H1 (cell line): ENCODE measurements at regions of chr3 and their contacts with region 1.

Region 1: GRCh38 chr3:48088749-48089466 is 72.7 kb upstream of the MAP4 start:
- DNase-seq: peak; percentile 91 to 94
- H3K4me3 ChIP-seq: peak overlapping the region; percentile 71 to 99 (median 82)
- H3K27ac ChIP-seq: peak overlapping the region; percentile 98
- H3K4me1 ChIP-seq: peaks cover 0 to 5% (median 0%) of the 10 kb centered on the region in 4 experiments; a peak in 2 of 7 replicates
- H3K27me3 ChIP-seq: no peaks in the 10 kb centered on the region
- CTCF ChIP-seq: peak in 2 of 3 experiments; percentile 1 to 24; a peak in 2 of 4 replicates
- EP300 ChIP-seq: no peak
- POLR2A ChIP-seq: peak; percentile 91 to 98
- RAD21 ChIP-seq: peak; percentile 25 to 44; a peak in 3 of 4 replicates

Region 2: DNA sequence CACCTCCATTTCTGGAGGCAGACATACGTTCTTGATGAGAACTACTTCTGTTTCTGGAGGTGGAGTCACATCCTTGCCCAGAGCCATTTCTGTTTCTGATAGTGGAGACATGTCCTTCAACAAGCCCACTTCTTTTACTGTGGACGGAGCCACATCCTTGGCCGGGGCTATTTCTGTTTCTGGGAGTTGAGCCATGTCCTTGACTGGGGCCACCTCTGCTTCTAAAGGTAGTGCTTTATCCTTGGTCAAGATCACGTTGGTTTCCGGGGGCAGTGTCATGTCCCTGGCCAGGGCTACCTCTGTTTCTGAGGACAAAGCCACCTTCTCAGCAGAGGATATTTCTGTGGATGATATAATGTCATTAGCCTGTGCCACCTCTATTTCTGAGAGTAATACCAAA is 172.7 kb before region 1 on chr3:
- CTCF ChIA-PET with region 1: no interaction called
- POLR2A ChIA-PET with region 1: no interaction called
- DNase-seq: no peak
- H3K4me3 ChIP-seq: no peak overlapping the region
- H3K27ac ChIP-seq: no peak overlapping the region
- H3K4me1 ChIP-seq: no peaks in the 10 kb centered on the region
- H3K27me3 ChIP-seq: no peaks in the 10 kb centered on the region
- CTCF ChIP-seq: no peak
- EP300 ChIP-seq: no peak
- POLR2A ChIP-seq: no peak
- RAD21 ChIP-seq: no peak

Region 3: GRCh38 chr3:48077815-48078214 is 11.1 kb before region 1 on chr3:
- CTCF ChIA-PET with region 1: interaction called, 3 read pairs
- POLR2A ChIA-PET with region 1: interaction called, 57 read pairs
- DNase-seq: no peak
- H3K4me3 ChIP-seq: no peak overlapping the region
- H3K27ac ChIP-seq: no peak overlapping the region
- H3K4me1 ChIP-seq: no peaks in the 10 kb centered on the region
- H3K27me3 ChIP-seq: no peaks in the 10 kb centered on the region
- CTCF ChIP-seq: no peak
- EP300 ChIP-seq: no peak
- POLR2A ChIP-seq: no peak
- RAD21 ChIP-seq: no peak

Region 4: DNA sequence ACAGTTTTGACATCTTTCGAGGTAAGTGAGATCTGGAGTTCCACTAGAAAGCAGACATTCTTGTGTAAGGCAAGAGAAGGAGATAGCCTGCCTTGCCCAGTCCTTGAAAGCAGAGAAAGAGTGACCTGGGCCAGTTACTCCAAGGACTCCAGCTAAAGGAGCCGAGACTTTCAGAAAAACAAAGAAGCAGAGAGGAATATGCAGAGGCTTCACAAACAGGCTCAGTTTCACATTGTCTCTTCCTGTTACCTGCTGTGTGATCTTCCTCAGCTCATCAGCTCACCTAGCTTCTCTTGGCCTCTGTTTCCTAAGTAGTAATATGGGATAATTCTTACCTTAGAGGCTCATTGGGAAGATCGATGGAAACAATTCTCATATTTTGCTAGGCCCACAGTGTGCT is 18.3 kb after region 1 on chr3:
- CTCF ChIA-PET with region 1: interaction called, 3 read pairs
- POLR2A ChIA-PET with region 1: interaction called, 48 read pairs
- DNase-seq: no peak
- H3K4me3 ChIP-seq: no peak overlapping the region
- H3K27ac ChIP-seq: peak overlapping the region; percentile 2; the same call in 1 of the 2 replicates
- H3K4me1 ChIP-seq: peaks cover 0 to 2% (median 0%) of the 10 kb centered on the region in 4 experiments; a peak in 1 of 7 replicates
- H3K27me3 ChIP-seq: no peaks in the 10 kb centered on the region
- CTCF ChIP-seq: no peak
- EP300 ChIP-seq: no peak
- POLR2A ChIP-seq: no peak
- RAD21 ChIP-seq: 0 out of 4 replicates have a peak, but pooled peaks of 1 of the 2 experiments have one; percentile 2

Region 5: GRCh38 chr3:48112813-48113212 is 23.9 kb after region 1 on chr3:
- CTCF ChIA-PET with region 1: interaction called, 3 read pairs
- POLR2A ChIA-PET with region 1: interaction called, 15 read pairs
- DNase-seq: no peak
- H3K4me3 ChIP-seq: no peak overlapping the region
- H3K27ac ChIP-seq: no peak overlapping the region
- H3K4me1 ChIP-seq: peaks cover 0 to 9% (median 2%) of the 10 kb centered on the region in 4 experiments; a peak in 3 of 7 replicates
- H3K27me3 ChIP-seq: no peaks in the 10 kb centered on the region
- CTCF ChIP-seq: no peak
- EP300 ChIP-seq: no peak
- POLR2A ChIP-seq: no peak
- RAD21 ChIP-seq: no peak

Region 6: GRCh38 chr3:48125026-48125705 is 36.3 kb after region 1 on chr3:
- CTCF ChIA-PET with region 1: interaction called, 3 read pairs
- POLR2A ChIA-PET with region 1: interaction called, 11 read pairs
- DNase-seq: peak in 1 of 2 experiments; percentile 43
- H3K4me3 ChIP-seq: no peak overlapping the region
- H3K27ac ChIP-seq: no peak overlapping the region
- H3K4me1 ChIP-seq: peaks cover 0 to 5% (median 1%) of the 10 kb centered on the region in 4 experiments; a peak in 4 of 7 replicates
- H3K27me3 ChIP-seq: no peaks in the 10 kb centered on the region
- CTCF ChIP-seq: no peak
- EP300 ChIP-seq: no peak
- POLR2A ChIP-seq: no peak
- RAD21 ChIP-seq: no peak

Region 7: DNA sequence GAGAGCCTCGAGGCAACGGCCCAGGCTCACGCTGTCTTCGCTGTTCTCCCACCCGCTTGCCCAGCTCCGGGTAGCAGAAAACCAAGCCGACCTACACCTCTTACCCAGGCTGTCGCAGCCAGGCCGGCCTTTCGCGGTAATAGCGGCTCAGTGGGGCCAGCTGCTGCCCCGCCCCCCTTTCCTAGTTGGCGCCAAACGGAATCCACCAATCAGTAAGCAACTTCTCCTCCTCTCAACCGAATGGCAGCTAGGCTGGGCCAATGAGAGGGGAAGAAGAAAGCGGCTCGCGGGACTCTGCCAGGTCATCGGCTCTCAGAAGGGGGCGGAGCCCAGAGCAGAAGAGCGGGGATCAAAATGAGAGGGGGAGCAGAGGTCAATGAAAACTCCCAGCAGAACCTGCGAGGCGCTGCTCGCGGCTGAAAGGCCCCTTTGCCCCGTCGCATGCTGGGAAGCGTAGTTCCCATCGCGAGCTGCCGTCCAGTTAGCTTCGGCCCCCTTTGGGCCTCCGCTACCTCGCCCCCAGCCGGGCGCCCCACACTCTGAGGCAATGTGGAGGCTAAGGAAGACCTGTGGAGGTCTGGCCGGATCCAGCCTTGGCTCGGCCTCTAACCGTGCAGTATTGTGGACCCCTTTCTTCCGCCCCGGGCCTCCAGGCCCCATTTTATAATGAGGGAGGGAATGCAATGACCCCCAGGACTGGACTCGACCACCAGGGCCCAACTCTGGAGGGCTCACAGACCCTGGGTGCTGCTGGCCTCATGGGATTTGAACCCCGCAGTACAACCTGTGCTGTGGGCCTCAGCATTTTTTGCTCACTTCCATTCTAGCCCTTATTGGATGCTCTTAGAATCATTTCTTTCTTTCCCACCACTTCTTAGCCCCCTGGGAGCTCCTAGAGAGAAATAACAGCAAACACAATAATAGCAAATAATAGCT is 99.6 kb after region 1 on chr3 and contains the start of gene CDC25A:
- CTCF ChIA-PET with region 1: no interaction called
- POLR2A ChIA-PET with region 1: interaction called, 13 read pairs
- DNase-seq: peak; percentile 92 to 98
- H3K4me3 ChIP-seq: peak within 1 kb of the TSS; percentile 65 to 98 (median 87)
- H3K27ac ChIP-seq: peak within 1 kb of the TSS; percentile 74
- H3K4me1 ChIP-seq: peaks cover 0 to 12% (median 8%) of the 10 kb centered on the region in 4 experiments; a peak in 5 of 7 replicates
- H3K27me3 ChIP-seq: no peaks in the 10 kb centered on the region
- CTCF ChIP-seq: no peak
- EP300 ChIP-seq: no peak
- POLR2A ChIP-seq: peak; percentile 81 to 88
- RAD21 ChIP-seq: no peak
- total RNA-seq, gene CDC25A: 62.1 and 65.0 TPM in 2 replicates